ENCODE measurements at regions of chr5 and their contacts with region 1.

Region 1: DNA sequence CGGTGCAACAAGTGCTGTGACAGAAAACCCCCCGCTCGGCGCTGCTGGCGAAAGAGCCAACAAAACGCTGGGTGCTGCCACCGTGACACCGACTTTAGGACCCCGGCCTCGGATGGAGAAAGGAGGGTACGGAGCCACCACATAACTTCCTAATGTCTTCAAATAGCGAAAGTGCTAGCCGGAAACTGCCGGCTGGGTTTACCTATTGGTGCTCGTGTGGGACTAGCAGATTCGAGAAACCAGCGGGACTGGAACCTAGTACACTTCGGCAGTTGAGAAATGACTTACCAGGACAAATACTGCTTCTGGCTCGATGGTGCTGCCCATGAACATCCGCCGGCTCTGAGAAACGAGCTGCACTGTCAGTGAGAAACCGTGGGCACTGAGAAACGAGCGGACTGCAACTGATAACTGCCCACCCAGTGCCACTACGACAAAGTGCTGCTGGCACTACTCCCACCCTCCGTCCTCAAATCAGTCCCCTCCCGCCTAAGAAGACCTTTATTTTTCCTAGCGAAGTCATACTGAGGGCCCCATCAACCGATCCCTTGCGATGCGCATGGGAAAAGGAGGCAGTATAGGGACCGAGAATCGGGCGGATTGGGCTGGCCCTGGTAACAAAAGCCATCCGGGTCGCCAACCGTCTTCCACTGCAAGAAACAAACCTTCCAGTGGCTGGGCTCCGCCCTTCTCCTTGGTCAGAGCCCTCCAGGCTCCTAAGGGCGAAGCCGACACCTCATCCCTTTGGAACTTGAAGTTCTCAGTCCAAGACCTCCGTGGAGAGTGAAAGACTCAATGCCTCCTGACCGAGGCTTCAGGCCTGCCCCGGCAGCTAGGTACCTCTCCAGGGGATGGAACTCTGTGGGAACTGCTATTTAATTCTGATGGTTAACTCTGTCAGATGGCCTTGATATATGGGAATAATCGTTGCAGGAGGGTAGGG is 27.0 kb upstream of the ANXA2R start:
- DNase-seq: peak; percentile 91 to 93
- H3K4me3 ChIP-seq: peak overlapping the region; percentile 75
- H3K27ac ChIP-seq: peak overlapping the region; percentile 84
- H3K4me1 ChIP-seq: peaks cover 27% of the 10 kb centered on the region
- H3K27me3 ChIP-seq: no peaks in the 10 kb centered on the region
- CTCF ChIP-seq: no peak

Region 2: GRCh38 chr5:43000111-43000845 is 66.8 kb before region 1 on chr5:
- CTCF ChIA-PET with region 1: no interaction called
- POLR2A ChIA-PET with region 1: no interaction called
- intact Hi-C with region 1: loop called (anchors 2 kb)
- DNase-seq: peak; percentile 69 to 81
- H3K4me3 ChIP-seq: peak overlapping the region; percentile 55
- H3K27ac ChIP-seq: peak overlapping the region; percentile 59
- H3K4me1 ChIP-seq: peaks cover 29% of the 10 kb centered on the region
- H3K27me3 ChIP-seq: no peaks in the 10 kb centered on the region
- CTCF ChIP-seq: no peak

Region 3: DNA sequence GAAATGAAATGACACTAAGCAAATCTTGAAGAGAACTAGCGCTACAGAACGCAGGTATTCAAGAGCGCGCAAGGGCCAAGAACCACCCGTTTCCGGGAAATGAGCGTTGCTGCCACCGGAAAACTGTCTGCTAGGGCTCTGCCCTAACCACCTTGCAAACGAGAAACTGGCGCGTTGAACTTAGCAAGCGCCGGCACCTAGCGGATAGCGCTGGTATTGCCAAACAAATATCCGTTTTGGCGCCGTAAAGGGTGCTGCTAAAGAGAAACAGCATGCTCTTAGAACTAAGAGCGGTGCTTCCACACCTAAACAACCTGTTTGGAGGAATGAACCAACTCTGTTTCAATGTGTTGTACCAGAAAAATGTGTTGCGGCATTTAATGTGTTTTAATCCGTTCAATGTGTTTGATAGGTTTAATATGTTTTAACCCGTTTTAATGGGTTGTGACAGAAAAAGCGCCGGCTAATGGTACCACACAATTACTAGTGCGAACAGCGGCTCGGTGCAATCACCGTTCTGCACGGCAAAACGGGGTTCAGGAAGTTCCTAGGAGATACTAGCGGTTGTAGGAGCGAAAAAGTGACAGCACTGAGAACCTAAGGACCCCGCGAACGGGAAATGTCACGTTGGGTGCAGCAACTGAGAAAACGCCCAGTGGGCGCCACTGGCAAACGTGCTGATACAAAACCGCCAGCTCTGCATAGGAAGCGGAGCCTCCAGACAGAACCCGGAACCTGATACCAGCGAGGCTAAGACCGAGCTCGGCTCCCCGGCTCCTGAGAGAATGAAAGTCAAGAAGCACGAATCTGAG is 26.6 kb before region 1 on chr5 and contains the start of gene ANXA2R:
- CTCF ChIA-PET with region 1: interaction called, 25 read pairs
- POLR2A ChIA-PET with region 1: interaction called, 11 read pairs
- intact Hi-C with region 1: loop called (anchors 1 kb)
- DNase-seq: peak; percentile 94 to 97
- H3K4me3 ChIP-seq: peak within 1 kb of the TSS; percentile 76
- H3K27ac ChIP-seq: peak within 1 kb of the TSS; percentile 60
- H3K4me1 ChIP-seq: peaks cover 1% of the 10 kb centered on the region; the same call in 1 of the 2 replicates
- H3K27me3 ChIP-seq: no peaks in the 10 kb centered on the region
- CTCF ChIP-seq: peak; percentile 99
- total RNA-seq, gene ANXA2R: 3.6 and 6.3 TPM in 2 replicates

Region 4: GRCh38 chr5:43514816-43515677 is 448.0 kb after region 1 on chr5 and contains the start of gene C5orf34:
- CTCF ChIA-PET with region 1: interaction called, 10 read pairs
- POLR2A ChIA-PET with region 1: no interaction called
- intact Hi-C with region 1: loop called (anchors 2 kb)
- DNase-seq: peak; percentile 99 to 100
- H3K4me3 ChIP-seq: peak within 1 kb of the TSS; percentile 73
- H3K27ac ChIP-seq: peak within 1 kb of the TSS; percentile 72
- H3K4me1 ChIP-seq: peaks cover 22% of the 10 kb centered on the region
- H3K27me3 ChIP-seq: no peaks in the 10 kb centered on the region
- CTCF ChIP-seq: 0 out of 2 replicates have a peak, but pooled peaks have one; percentile 15
- total RNA-seq, gene C5orf34: 16.0 and 22.6 TPM in 2 replicates

Measured in PC-9 (cell line).